PC-9 (cell line): ENCODE measurements at regions of chr4 and their contacts with region 1.

Region 1: GRCh38 chr4:34198966-34199365 is 2045.3 kb downstream of the ARAP2 start:
- DNase-seq: no peak
- H3K4me3 ChIP-seq: no peak overlapping the region
- H3K27ac ChIP-seq: no peak overlapping the region
- H3K4me1 ChIP-seq: peaks cover 2% of the 10 kb centered on the region; the same call in 1 of the 2 replicates
- H3K27me3 ChIP-seq: no peaks in the 10 kb centered on the region
- CTCF ChIP-seq: no peak

Region 2: GRCh38 chr4:34112573-34112972 is 86.4 kb before region 1 on chr4:
- CTCF ChIA-PET with region 1: no interaction called
- POLR2A ChIA-PET with region 1: interaction called, 18 read pairs
- intact Hi-C with region 1: no loop called
- DNase-seq: no peak
- H3K4me3 ChIP-seq: no peak overlapping the region
- H3K27ac ChIP-seq: no peak overlapping the region
- H3K4me1 ChIP-seq: no peaks in the 10 kb centered on the region
- H3K27me3 ChIP-seq: no peaks in the 10 kb centered on the region
- CTCF ChIP-seq: no peak